Left colon (tissue), 2 donors: ENCODE measurements at regions of chr15 and their contacts with region 1.

Region 1: DNA sequence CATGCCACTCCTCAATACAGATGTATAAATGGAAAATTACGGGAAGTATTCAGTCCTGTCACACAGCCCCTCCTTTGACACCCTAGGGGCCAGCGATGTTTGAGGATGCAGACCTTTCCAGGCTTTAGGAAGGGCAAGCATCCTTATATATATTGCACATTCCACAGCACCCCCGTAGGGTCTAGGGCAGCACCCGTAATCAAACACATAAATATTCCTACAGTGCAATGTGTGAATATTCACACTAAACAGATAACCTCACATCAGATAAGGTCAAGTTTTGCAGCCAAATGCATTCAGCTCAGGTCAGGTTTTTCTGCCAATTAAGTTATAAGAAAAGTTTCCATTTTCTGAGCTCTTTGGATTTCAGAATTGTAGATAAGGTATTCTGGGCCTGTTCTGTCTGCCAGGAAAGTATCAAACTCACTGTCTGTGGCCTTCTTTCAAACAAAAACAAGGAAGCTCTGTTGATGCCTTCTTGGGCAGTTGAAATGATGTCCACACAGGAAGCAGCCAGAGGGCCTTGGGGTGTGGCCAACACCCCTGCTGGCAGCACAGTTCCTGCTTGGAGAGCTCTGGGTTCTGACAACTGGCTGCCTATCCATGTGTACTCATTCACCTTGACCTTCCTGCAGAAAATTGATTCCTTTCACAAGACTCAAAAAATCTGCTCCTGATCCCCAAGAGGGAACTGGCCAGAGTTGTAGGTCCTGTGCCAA is 427.0 kb downstream of the NTRK3 start:
- DNase-seq: no peak
- ATAC-seq: no peak

Region 2: DNA sequence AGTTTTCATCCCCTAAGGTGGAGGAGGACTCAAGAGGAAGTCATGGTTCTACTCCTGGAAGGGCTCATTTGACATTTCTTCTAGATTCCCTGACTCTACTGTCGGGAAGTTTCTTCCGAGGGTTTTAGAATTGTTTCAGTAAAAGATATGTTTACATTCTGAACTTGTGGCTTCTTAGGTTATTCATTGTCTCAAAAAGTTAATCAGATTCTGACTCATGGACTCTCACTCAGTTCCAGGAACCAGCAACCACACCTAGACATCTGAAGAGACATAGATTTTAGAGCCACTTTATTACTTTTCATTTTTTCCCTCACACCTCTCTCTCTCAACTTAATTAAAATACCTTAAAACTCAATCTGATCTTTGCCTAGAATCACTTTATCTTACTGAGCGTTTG is 887.2 kb before region 1 on chr15:
- intact Hi-C with region 1: loop called in 1 of 2 experiments (anchors 10 kb)
- DNase-seq: no peak
- ATAC-seq: no peak